ENCODE measurements at regions of chr5 and their contacts with region 1.

Region 1: GRCh38 chr5:161546470-161547301 is at the start of gene GABRB2:
- DNase-seq: peak; percentile 59
- ATAC-seq: peak; percentile 39
- total RNA-seq, gene GABRB2: not detected

Region 2: GRCh38 chr5:161391724-161392123 is 155.0 kb before region 1 on chr5:
- intact Hi-C with region 1: no loop called
- DNase-seq: no peak
- ATAC-seq: no peak

Region 3: DNA sequence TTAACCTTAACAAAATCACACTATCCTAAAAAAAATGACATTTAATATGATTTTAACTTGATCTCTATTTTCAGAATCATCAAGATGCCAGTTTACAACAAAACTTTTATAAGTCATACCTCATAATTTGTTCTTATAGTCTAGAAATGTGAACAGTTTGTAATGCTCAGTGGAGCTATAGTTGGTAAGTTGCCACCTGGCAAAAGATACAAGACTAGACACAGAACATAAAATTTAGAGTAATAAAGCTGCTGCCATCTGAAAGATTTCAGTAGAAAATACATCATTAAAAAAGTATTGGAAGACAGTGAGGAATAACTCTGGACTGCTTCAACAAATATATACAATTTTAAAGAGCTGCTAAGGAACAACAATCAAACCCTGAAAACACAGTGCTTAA is 754.7 kb after region 1 on chr5:
- intact Hi-C with region 1: no loop called
- DNase-seq: no peak
- ATAC-seq: no peak

Region 4: DNA sequence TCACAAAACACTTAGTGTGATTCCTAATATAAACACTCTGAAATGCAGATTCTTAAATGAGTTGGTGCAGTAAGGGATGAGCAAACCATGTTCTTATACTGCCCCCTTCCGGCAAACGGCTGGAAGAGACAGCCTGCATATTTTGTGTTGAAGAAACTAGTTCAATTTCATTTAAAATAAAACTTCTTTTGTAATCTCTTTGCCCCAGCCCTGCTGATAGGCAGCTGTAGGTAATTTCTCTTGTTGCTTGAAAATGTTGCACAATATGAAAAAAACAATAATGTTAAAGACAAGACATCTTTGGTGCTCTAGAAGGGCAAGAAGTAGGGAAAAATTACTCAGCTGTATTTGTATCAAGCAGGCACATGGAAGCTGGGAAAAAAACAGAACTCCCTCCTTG is 1801.0 kb after region 1 on chr5:
- intact Hi-C with region 1: loop called (anchors 5 kb)
- DNase-seq: no peak
- ATAC-seq: peak; percentile 55